Right ventricle myocardium inferior (tissue), 1 donor: ENCODE measurements at regions of chrX and their contacts with region 1.

Region 1: GRCh38 chrX:45801554-45801953 is 600.9 kb upstream of the DIPK2B start:
- DNase-seq: no peak
- ATAC-seq: no peak

Region 2: DNA sequence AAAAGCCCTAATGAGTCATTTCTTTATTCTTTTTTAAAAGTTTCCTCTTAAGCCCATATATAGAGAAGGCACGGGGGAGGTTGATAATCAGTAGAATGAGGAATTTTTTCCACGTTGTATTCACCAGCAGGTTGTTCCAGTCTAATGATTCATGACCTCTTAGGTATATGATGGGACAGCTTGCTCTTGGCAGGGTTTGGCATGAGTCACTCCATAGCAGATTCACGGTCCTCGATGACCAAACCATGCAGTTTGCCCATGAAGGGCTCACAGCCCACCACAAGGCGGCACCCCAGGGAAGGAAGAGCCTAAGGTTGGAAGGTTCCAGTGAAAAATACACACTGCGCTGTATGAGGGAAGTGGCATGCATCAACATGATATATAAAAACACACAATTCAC is 22.9 kb after region 1 on chrX:
- intact Hi-C with region 1: no loop called
- DNase-seq: no peak
- ATAC-seq: no peak

Region 3: DNA sequence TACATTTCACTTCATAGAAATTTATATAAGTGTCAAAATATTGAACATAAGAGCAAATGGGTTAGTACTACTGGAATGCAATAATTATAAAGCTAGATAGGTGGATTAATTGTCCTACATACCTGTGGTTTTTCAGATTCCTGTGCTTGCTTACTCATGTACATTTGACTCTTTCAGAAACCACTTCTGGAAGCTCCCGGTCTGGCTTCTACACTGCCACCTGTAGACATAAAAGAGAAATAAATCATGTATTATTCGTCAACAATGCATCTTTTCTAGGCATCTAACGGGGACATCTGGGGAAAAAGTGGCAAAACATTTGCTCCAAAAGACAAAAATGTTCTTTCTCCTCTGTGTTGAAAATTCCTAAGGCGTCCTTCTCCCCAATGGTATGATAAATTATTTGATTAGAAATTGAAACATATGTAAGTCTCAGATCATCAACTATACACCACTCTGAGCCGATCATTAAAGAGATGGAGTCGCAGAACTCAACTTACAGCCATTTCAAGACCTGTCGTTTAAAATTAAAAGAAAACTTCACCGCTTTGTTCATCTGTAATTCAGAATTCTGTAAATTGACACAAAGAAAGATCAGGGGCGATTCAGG is 47.8 kb after region 1 on chrX:
- intact Hi-C with region 1: no loop called
- DNase-seq: no peak
- ATAC-seq: no peak

Region 4: GRCh38 chrX:46376246-46376885 is 574.8 kb after region 1 on chrX:
- intact Hi-C with region 1: loop called (anchors 5 kb)
- DNase-seq: no peak
- ATAC-seq: no peak